ENCODE measurements at regions of chr6 and their contacts with region 1.

Region 1: GRCh38 chr6:45714741-45715507 is 300.7 kb downstream of the CLIC5 start:
- DNase-seq: peak; percentile 61
- H3K4me3 Mint-ChIP-seq: no peak overlapping the region
- H3K27ac Mint-ChIP-seq: no peak overlapping the region
- H3K4me1 Mint-ChIP-seq: peaks cover 23% of the 10 kb centered on the region
- H3K27me3 Mint-ChIP-seq: peaks cover 25% of the 10 kb centered on the region
- CTCF ChIP-seq: peak; percentile 54

Region 2: GRCh38 chr6:44464527-44465310 is 1250.2 kb before region 1 on chr6:
- CTCF ChIA-PET with region 1: no interaction called
- intact Hi-C with region 1: no loop called
- DNase-seq: no peak
- H3K4me3 Mint-ChIP-seq: no peak overlapping the region
- H3K27ac Mint-ChIP-seq: no peak overlapping the region
- H3K4me1 Mint-ChIP-seq: no peaks in the 10 kb centered on the region
- H3K27me3 Mint-ChIP-seq: peaks cover 14% of the 10 kb centered on the region
- CTCF ChIP-seq: no peak

Region 3: DNA sequence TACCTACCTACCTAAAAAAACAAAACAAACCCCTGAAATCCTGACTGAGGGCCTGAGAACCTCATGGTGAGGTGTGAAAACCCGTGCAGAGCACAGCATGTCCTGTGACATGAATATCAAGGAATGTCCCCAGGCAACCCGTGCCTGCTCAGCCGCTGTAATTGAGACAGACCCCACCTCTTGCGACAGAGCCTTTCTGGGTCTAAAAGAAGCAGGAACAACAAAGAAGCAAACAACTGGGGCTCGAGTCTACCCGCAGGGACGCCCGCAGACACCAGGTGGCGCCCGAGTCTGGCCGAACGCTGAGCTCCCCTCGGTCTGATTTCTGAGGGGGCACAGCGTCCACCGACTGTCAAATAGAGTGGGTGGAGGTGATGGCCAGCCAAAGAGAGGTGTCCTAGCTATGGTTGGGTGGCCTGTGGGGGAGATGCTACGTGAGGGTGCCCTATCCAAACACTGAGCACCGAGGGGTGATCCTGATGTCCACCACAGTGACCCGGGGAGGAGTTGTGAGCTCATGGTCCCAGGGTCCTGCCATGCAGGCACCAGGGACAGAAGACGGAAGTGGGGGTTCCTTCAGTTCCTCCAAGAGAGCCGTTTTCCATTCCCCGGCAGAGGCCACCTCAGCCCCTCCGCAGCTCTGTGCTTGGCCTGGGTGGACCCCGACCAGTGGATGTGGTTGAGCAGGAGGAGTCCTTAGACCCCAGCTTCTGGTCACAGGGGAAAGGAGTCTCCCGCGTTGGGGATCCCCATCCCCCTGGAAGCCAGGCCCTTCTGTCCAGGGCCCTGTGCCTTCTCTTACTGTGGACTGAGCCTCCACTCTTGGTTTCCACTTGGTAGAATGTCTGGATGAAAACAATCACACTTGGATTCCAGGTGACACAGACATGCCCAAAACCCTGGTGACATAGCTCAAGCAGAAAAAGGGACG is 1059.2 kb before region 1 on chr6:
- CTCF ChIA-PET with region 1: interaction called, 10 read pairs
- intact Hi-C with region 1: loop called (anchors 5 kb)
- DNase-seq: peak; percentile 90
- H3K4me3 Mint-ChIP-seq: peak overlapping the region; percentile 2
- H3K27ac Mint-ChIP-seq: peak overlapping the region; percentile 20
- H3K4me1 Mint-ChIP-seq: peaks cover 21% of the 10 kb centered on the region
- H3K27me3 Mint-ChIP-seq: peaks cover 83% of the 10 kb centered on the region
- CTCF ChIP-seq: peak; percentile 98

Region 4: DNA sequence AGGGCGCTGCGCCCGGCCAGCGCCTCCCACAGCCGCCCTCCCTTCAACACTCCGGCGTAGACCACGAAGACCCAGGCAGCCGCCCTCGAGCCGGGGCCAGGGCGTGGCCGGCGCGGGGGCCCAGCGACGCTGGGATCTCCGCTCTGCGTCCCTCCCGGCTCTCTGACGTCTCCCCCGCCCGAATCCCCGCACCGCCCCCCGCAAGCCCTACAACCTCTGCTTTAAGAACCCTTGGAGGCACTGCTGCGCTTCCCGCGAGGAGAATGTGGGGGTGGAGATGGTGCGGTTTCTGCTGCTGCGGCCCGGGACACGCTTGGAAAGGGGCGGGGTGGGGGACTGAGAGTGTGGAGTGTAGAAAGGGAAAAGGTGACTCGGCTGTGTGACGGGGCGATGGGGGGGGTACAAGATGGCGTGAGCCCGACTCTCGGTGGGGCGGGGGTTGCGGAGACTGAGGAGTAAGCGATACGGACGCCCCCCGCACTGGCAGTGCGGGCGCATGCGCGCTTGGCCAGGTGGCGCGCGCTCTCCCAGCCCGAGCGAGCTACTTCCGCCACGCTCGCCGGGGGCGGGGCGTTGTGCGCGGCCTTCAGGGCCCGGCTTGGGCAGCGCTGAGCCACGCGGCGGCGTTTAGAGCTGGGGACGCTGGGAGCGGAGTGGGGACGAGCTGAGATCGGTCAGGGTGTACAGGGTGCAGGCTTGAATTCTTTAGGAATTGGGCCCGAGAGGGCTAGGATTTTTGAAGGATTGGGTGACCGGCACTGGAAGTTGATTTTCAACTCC is 337.2 kb before region 1 on chr6 and contains the start of gene SUPT3H:
- CTCF ChIA-PET with region 1: interaction called, 20 read pairs
- intact Hi-C with region 1: no loop called
- DNase-seq: peak; percentile 93
- H3K4me3 Mint-ChIP-seq: peak within 1 kb of the TSS; percentile 96
- H3K27ac Mint-ChIP-seq: peak within 1 kb of the TSS; percentile 97
- H3K4me1 Mint-ChIP-seq: no peaks in the 10 kb centered on the region
- H3K27me3 Mint-ChIP-seq: no peaks in the 10 kb centered on the region
- CTCF ChIP-seq: no peak
- total RNA-seq, gene SUPT3H: 7.0 and 10.3 TPM in 2 replicates

Region 5: GRCh38 chr6:45522486-45522885 is 192.4 kb before region 1 on chr6:
- CTCF ChIA-PET with region 1: interaction called, 3 read pairs
- intact Hi-C with region 1: loop called (anchors 1 kb)
- DNase-seq: no peak
- H3K4me3 Mint-ChIP-seq: no peak overlapping the region
- H3K27ac Mint-ChIP-seq: no peak overlapping the region
- H3K4me1 Mint-ChIP-seq: no peaks in the 10 kb centered on the region
- H3K27me3 Mint-ChIP-seq: peaks cover 13% of the 10 kb centered on the region
- CTCF ChIP-seq: no peak

Region 6: GRCh38 chr6:45854149-45854742 is 139.3 kb after region 1 on chr6:
- CTCF ChIA-PET with region 1: no interaction called
- intact Hi-C with region 1: no loop called
- DNase-seq: no peak
- H3K4me3 Mint-ChIP-seq: no peak overlapping the region
- H3K27ac Mint-ChIP-seq: no peak overlapping the region
- H3K4me1 Mint-ChIP-seq: no peaks in the 10 kb centered on the region
- H3K27me3 Mint-ChIP-seq: peaks cover 65% of the 10 kb centered on the region
- CTCF ChIP-seq: no peak